Right cardiac atrium (tissue), 5 donors: ENCODE measurements at regions of chr9 and their contacts with region 1.

Region 1: GRCh38 chr9:136539427-136540421 is 6.1 kb downstream of the NOTCH1 start:
- DNase-seq: peak; percentile 95 to 97 (median 96)
- ATAC-seq: peak; percentile 76 to 84
- H3K4me3 ChIP-seq: no peak overlapping the region
- H3K27ac ChIP-seq: peak overlapping the region; percentile 78
- H3K4me1 ChIP-seq: peaks cover 15% of the 10 kb centered on the region
- H3K27me3 ChIP-seq: no peaks in the 10 kb centered on the region

Region 2: GRCh38 chr9:136502942-136503550 is 36.7 kb before region 1 on chr9:
- intact Hi-C with region 1: loop called in 1 of 4 experiments (anchors 5 kb)
- DNase-seq: no peak
- ATAC-seq: no peak
- H3K4me3 ChIP-seq: no peak overlapping the region
- H3K27ac ChIP-seq: no peak overlapping the region
- H3K4me1 ChIP-seq: no peaks in the 10 kb centered on the region
- H3K27me3 ChIP-seq: no peaks in the 10 kb centered on the region